CD4-positive, alpha-beta memory T cell (primary cell): ENCODE measurements at regions of chr11 and their contacts with region 1.

Region 1: DNA sequence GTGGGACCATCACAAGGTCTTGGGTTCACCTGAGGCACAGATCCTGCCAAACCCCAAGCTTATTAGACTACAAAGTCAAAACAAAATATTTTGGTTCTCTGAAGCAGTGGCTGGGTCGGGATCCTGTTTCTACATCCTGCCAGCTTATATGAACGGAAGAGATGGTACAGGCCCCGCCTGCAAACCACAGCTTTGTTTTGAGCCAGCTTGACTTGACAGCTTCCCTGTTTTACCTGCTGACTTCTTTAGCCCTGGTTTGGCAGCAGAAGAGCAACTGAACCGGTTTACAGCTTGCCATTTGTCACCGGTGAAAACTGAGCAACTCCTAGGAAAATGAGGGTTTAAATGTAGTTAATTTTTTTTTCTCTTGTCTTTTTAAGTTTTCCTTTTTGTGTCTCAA is 11.4 kb downstream of the PACS1 start:
- DNase-seq: peak; percentile 79 to 93 (median 83)
- H3K4me3 ChIP-seq: peak overlapping the region in 1 of 2 donors; percentile 35
- H3K4me3 Mint-ChIP-seq: peak overlapping the region; percentile 88 to 98 (median 90)
- H3K27ac ChIP-seq: peak overlapping the region; percentile 66
- H3K27ac Mint-ChIP-seq: peak overlapping the region; percentile 93 to 100 (median 99)
- H3K4me1 ChIP-seq: peaks cover 94% of the 10 kb centered on the region
- H3K4me1 Mint-ChIP-seq: peaks cover 65 to 92% (median 81%) of the 10 kb centered on the region in 4 donors
- H3K27me3 ChIP-seq: no peaks in the 10 kb centered on the region
- H3K27me3 Mint-ChIP-seq: no peaks in the 10 kb centered on the region

Region 2: GRCh38 chr11:66051766-66052663 is 29.5 kb before region 1 on chr11 and contains the start of gene SF3B2:
- CTCF ChIA-PET with region 1: interaction called, 3 read pairs
- POLR2A ChIA-PET with region 1: interaction called, 13 read pairs
- intact Hi-C with region 1: no loop called
- DNase-seq: peak; percentile 93 to 96 (median 96)
- H3K4me3 ChIP-seq: peak within 1 kb of the TSS; percentile 91 to 99
- H3K4me3 Mint-ChIP-seq: peak within 1 kb of the TSS; percentile 99 to 100 (median 100)
- H3K27ac ChIP-seq: peak within 1 kb of the TSS; percentile 81
- H3K27ac Mint-ChIP-seq: peak within 1 kb of the TSS; percentile 98 to 100 (median 99)
- H3K4me1 ChIP-seq: peaks cover 23% of the 10 kb centered on the region
- H3K4me1 Mint-ChIP-seq: peaks cover 12 to 40% (median 25%) of the 10 kb centered on the region in 4 donors
- H3K27me3 ChIP-seq: no peaks in the 10 kb centered on the region
- H3K27me3 Mint-ChIP-seq: peaks cover 0 to 1% of the 10 kb centered on the region in 2 donors
- total RNA-seq, gene SF3B2: 238 to 240 TPM

Region 3: DNA sequence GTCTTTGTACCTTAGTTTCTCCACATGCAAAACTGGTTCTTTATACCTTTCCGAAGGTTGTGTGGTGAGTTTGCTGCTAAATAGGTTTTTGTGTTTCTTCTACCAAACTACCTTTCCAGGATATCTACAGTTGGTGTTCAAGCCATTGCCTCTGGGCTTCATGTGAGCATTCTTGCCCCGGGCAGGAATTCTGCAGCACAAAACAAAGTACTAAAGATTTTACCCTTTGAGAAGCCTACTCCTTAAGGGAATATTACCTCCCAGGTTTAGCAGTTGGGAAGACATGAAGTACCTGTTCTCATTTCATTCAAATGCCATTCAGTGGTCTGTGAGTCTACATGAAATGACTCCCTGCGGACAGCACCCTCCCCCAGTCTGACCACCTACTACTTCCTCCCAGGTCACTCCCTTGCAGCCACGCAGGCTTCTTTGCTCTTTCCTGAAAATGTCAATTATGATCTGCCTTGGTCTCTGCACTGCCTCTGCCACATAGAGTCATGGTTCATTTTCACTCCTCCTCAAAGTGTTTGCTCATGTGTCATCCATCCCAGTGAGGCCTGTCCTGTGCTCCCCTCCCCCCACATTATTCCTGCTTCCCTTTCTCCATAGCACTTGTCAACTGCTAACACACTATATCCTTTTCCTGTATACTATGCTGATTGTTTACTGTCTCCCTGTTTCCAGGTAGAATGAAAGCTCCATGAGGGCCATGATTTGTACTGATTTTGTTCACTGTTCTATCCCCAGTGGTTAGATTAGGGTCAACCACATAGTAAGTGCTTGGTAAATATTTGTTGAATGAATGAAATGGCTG is 25.5 kb after region 1 on chr11:
- CTCF ChIA-PET with region 1: interaction called, 11 read pairs
- POLR2A ChIA-PET with region 1: interaction called, 60 read pairs
- intact Hi-C with region 1: no loop called
- DNase-seq: no peak
- H3K4me3 ChIP-seq: no peak overlapping the region
- H3K4me3 Mint-ChIP-seq: peak overlapping the region in 6 of 8 donors; percentile 5 to 73 (median 67)
- H3K27ac ChIP-seq: no peak overlapping the region
- H3K27ac Mint-ChIP-seq: peak overlapping the region; percentile 19 to 86 (median 77)
- H3K4me1 ChIP-seq: peaks cover 96% of the 10 kb centered on the region
- H3K4me1 Mint-ChIP-seq: peaks cover 62 to 90% (median 75%) of the 10 kb centered on the region in 4 donors
- H3K27me3 ChIP-seq: no peaks in the 10 kb centered on the region
- H3K27me3 Mint-ChIP-seq: no peaks in the 10 kb centered on the region

Region 4: GRCh38 chr11:66119348-66120133 is 38.0 kb after region 1 on chr11:
- CTCF ChIA-PET with region 1: interaction called, 231 read pairs
- POLR2A ChIA-PET with region 1: interaction called, 185 read pairs
- intact Hi-C with region 1: loop called (anchors 5 kb)
- DNase-seq: no peak
- H3K4me3 ChIP-seq: no peak overlapping the region
- H3K4me3 Mint-ChIP-seq: peak overlapping the region in 5 of 8 donors; percentile 4 to 65 (median 48)
- H3K27ac ChIP-seq: no peak overlapping the region
- H3K27ac Mint-ChIP-seq: peak overlapping the region; percentile 34 to 84 (median 73)
- H3K4me1 ChIP-seq: peaks cover 90% of the 10 kb centered on the region
- H3K4me1 Mint-ChIP-seq: peaks cover 66 to 94% (median 83%) of the 10 kb centered on the region in 4 donors
- H3K27me3 ChIP-seq: no peaks in the 10 kb centered on the region
- H3K27me3 Mint-ChIP-seq: no peaks in the 10 kb centered on the region

Region 5: DNA sequence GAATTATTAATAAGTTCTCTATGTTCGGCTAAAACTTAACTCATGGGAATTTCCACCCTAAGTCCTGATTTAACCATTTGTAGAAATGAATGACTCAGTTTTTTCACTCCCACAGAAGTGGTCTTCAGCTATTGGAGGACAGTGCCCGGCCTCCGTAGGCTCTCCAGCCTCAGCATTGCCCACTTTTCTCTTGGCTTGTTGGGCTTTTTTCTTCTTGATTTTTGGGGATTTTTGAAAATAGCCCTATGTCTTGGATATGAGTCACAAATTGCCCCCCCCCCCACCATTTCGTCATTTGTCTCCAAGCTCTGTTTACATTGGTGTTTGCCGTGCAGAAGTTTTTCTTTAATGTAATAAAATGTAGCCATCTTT is 55.2 kb after region 1 on chr11:
- CTCF ChIA-PET with region 1: interaction called, 51 read pairs
- POLR2A ChIA-PET with region 1: interaction called, 5 read pairs
- intact Hi-C with region 1: no loop called
- DNase-seq: peak in 1 of 5 donors; percentile 48
- H3K4me3 ChIP-seq: no peak overlapping the region
- H3K4me3 Mint-ChIP-seq: no peak overlapping the region
- H3K27ac ChIP-seq: no peak overlapping the region
- H3K27ac Mint-ChIP-seq: peak overlapping the region in 5 of 7 donors; percentile 32 to 81 (median 46)
- H3K4me1 ChIP-seq: peaks cover 48% of the 10 kb centered on the region
- H3K4me1 Mint-ChIP-seq: peaks cover 34 to 70% (median 54%) of the 10 kb centered on the region in 4 donors
- H3K27me3 ChIP-seq: no peaks in the 10 kb centered on the region
- H3K27me3 Mint-ChIP-seq: no peaks in the 10 kb centered on the region